ENCODE measurements at regions of chr19 and their contacts with region 1.

Region 1: DNA sequence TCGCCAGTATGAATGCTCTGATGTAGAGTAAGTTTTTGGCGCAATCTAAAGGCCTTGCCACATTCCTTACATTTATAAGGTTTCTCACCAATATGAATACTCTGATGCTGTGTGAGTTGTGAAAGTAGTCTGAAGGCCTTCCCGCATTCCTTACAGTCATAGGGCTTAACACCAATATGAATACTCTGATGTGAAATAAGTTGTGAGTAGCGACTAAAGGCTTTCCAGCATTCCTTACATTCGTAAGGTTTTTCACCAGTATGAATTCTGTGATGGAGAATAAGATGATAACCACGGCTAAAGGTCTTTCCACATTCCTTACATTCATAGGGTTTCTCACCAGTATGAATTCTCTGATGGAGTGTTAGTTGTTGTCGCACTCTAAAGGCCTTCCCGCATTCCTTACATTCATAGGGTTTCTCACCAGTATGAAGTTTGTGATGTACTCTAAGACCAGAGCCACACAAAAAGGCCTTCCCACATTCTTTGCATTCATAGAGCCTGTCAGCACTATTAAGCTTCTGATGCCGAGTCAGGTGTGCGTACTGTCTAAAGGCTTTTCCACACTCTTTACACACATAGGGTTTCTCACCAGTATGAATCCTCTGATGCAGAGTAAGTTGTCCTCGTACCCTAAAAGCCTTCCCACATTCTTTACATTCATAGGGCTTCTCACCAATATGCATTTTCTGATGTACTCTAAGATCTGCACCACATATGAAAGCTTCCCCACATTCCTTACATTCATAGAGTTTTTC is 14.1 kb upstream of the ZFP14 start:
- DNase-seq: no peak
- H3K4me3 ChIP-seq: no peak overlapping the region
- H3K27ac ChIP-seq: no peak overlapping the region
- H3K4me1 ChIP-seq: no peaks in the 10 kb centered on the region
- H3K27me3 ChIP-seq: no peaks in the 10 kb centered on the region
- CTCF ChIP-seq: no peak
- POLR2A ChIP-seq: no peak

Region 2: GRCh38 chr19:36939153-36939552 is 546.1 kb after region 1 on chr19:
- intact Hi-C with region 1: loop called (anchors 5 kb)
- DNase-seq: no peak
- H3K4me3 ChIP-seq: no peak overlapping the region
- H3K27ac ChIP-seq: no peak overlapping the region
- H3K4me1 ChIP-seq: no peaks in the 10 kb centered on the region
- H3K27me3 ChIP-seq: no peaks in the 10 kb centered on the region
- CTCF ChIP-seq: no peak
- POLR2A ChIP-seq: no peak